ENCODE measurements at regions of chr19 and their contacts with region 1.

Region 1: GRCh38 chr19:19475849-19476828 is 39.2 kb downstream of the TSSK6 start:
- DNase-seq: peak in 2 of 3 donors; percentile 25 to 28
- H3K4me3 ChIP-seq: no peak overlapping the region
- H3K4me3 Mint-ChIP-seq: no peak overlapping the region
- H3K27ac ChIP-seq: peak overlapping the region in 1 of 2 donors; percentile 47
- H3K27ac Mint-ChIP-seq: peak overlapping the region; percentile 58 to 84 (median 69)
- H3K4me1 ChIP-seq: peaks cover 6% of the 10 kb centered on the region in 2 donors
- H3K4me1 Mint-ChIP-seq: peaks cover 30% of the 10 kb centered on the region
- H3K27me3 ChIP-seq: no peaks in the 10 kb centered on the region
- H3K27me3 Mint-ChIP-seq: peaks cover 0 to 1% (median 0%) of the 10 kb centered on the region in 3 donors
- CTCF ChIP-seq: peak; percentile 44

Region 2: GRCh38 chr19:19418555-19419260 is 57.4 kb before region 1 on chr19:
- intact Hi-C with region 1: loop called in 1 of 2 experiments (anchors 5 kb)
- DNase-seq: peak in 1 of 3 donors; percentile 17
- H3K4me3 ChIP-seq: no peak overlapping the region
- H3K4me3 Mint-ChIP-seq: peak overlapping the region in 1 of 2 donors; percentile 42
- H3K27ac ChIP-seq: peak overlapping the region in 1 of 2 donors; percentile 45
- H3K27ac Mint-ChIP-seq: peak overlapping the region in 6 of 7 donors; percentile 31 to 79 (median 62)
- H3K4me1 ChIP-seq: peaks cover 22 to 40% of the 10 kb centered on the region in 2 donors
- H3K4me1 Mint-ChIP-seq: peaks cover 50% of the 10 kb centered on the region
- H3K27me3 ChIP-seq: no peaks in the 10 kb centered on the region
- H3K27me3 Mint-ChIP-seq: peaks cover 0 to 1% (median 0%) of the 10 kb centered on the region in 3 donors
- CTCF ChIP-seq: no peak

Region 3: DNA sequence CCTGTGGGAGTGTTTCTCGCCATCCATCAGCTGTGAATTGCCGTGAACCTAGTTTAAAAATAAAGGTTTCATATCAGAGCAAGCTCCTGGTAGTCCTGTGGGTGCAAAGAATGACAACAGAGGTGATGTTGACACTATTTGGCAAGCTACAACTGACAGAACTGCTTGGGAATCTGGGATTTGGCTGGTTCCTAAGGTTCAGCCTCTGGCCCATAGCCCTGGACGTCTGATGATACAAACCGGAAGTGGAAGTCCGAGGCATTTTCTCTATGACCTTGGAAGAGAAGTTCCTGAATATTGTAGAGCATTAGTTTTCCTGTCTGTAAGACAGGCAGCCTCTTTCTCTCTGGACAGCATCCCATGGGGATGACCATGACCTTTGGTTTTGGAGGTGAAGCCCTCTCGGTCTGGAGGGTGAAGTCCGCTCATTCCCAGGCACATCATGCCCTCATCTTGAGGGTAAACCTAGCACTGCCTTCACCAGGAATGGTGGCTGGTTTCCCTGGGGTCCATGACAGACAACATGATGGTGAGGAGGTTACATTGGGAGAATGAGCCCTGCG is 41.6 kb before region 1 on chr19:
- intact Hi-C with region 1: loop called in 1 of 2 experiments (anchors 5 kb)
- DNase-seq: no peak
- H3K4me3 ChIP-seq: no peak overlapping the region
- H3K4me3 Mint-ChIP-seq: no peak overlapping the region
- H3K27ac ChIP-seq: peak overlapping the region in 1 of 2 donors; percentile 38
- H3K27ac Mint-ChIP-seq: peak overlapping the region in 5 of 7 donors; percentile 27 to 82 (median 60)
- H3K4me1 ChIP-seq: no peaks in the 10 kb centered on the region
- H3K4me1 Mint-ChIP-seq: peaks cover 13% of the 10 kb centered on the region
- H3K27me3 ChIP-seq: no peaks in the 10 kb centered on the region
- H3K27me3 Mint-ChIP-seq: peaks cover 0 to 1% (median 0%) of the 10 kb centered on the region in 3 donors
- CTCF ChIP-seq: no peak

Region 4: DNA sequence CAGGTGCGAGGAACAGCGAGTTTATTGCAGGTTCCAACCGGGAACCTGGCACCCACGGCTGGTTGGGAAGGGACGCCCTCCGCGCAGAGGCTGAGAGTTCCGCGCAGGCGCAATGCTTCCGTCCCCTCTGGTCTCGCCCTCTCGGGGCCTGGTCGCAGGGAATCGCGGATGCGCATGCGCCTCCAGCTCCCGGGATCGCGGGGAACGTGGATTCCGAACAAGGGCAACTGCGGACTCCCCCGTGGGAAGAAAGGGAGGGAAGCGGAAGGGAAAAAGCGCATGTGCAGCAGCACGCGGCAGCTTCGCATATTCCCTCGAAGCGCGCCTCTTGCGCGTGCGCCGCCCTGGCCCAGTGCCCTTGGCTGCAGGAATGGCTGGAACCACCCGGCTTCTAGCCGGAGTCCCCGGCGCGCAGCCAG is 38.1 kb after region 1 on chr19:
- intact Hi-C with region 1: no loop called
- DNase-seq: peak in 1 of 3 donors; percentile 59
- H3K4me3 ChIP-seq: no peak overlapping the region
- H3K4me3 Mint-ChIP-seq: peak overlapping the region; percentile 12 to 67
- H3K27ac ChIP-seq: no peak overlapping the region
- H3K27ac Mint-ChIP-seq: peak overlapping the region in 1 of 7 donors; percentile 18
- H3K4me1 ChIP-seq: peaks cover 16 to 30% of the 10 kb centered on the region in 2 donors
- H3K4me1 Mint-ChIP-seq: peaks cover 11% of the 10 kb centered on the region
- H3K27me3 ChIP-seq: peaks cover 0 to 9% of the 10 kb centered on the region in 2 donors
- H3K27me3 Mint-ChIP-seq: peaks cover 0 to 15% (median 2%) of the 10 kb centered on the region in 3 donors
- CTCF ChIP-seq: no peak

Measured in CD14-positive monocyte (primary cell).